ENCODE measurements at regions of chr4 and their contacts with region 1.

Region 1: GRCh38 chr4:73258686-73259570 is at the start of gene ANKRD17:
- DNase-seq: peak; percentile 74 to 97
- H3K4me3 ChIP-seq: peak within 1 kb of the TSS; percentile 86 to 97
- H3K27ac ChIP-seq: peak within 1 kb of the TSS; percentile 92 to 99
- H3K4me1 ChIP-seq: peaks cover 4 to 28% of the 10 kb centered on the region in 2 donors
- H3K27me3 ChIP-seq: no peaks in the 10 kb centered on the region
- CTCF ChIP-seq: peak in 2 of 3 experiments; percentile 24 to 39
- total RNA-seq, gene ANKRD17: 52.0 TPM

Region 2: DNA sequence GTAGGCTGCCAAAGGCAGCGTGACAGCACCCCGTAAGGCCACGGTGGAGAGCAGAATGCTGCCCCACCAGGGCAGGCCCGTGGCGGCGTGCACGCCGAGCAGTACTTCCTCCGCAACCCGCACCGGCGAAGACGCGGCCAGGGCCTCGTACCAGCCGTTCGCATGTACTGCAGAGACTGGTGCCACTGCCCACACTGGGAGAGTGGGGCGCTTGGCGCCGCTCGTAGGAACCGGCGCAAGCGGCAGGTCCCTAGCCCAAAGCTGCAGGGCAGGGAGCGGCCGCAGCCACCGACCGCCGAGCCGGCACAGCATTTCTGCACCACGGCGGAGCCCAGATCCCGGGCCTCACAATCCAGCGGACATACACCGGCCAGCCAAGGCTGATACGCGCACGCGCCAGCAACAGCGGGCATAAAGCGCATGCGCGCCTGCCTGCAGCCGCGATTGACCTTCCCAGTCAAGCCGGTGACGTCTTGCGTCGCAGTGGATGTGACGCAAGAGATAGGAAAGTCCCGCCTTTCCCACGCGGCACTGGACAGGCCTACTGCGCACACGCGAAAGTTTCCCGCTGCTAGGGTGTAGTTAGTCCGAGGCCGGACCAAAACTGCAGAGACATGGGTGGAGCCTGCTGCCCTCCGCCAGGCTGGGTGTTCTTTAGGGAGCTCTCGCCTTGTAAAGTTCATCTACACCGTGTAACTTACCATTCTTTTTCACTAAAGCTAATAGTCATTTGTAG is 189.4 kb before region 1 on chr4 and contains the start of gene COX18:
- intact Hi-C with region 1: loop called (anchors 1 kb)
- DNase-seq: peak; percentile 93 to 99
- H3K4me3 ChIP-seq: peak within 1 kb of the TSS; percentile 60 to 99
- H3K27ac ChIP-seq: peak within 1 kb of the TSS; percentile 88 to 96
- H3K4me1 ChIP-seq: peaks cover 3 to 7% of the 10 kb centered on the region in 2 donors
- H3K27me3 ChIP-seq: no peaks in the 10 kb centered on the region
- CTCF ChIP-seq: peak in 1 of 3 experiments; percentile 6
- total RNA-seq, gene COX18: 22.7 TPM

Region 3: DNA sequence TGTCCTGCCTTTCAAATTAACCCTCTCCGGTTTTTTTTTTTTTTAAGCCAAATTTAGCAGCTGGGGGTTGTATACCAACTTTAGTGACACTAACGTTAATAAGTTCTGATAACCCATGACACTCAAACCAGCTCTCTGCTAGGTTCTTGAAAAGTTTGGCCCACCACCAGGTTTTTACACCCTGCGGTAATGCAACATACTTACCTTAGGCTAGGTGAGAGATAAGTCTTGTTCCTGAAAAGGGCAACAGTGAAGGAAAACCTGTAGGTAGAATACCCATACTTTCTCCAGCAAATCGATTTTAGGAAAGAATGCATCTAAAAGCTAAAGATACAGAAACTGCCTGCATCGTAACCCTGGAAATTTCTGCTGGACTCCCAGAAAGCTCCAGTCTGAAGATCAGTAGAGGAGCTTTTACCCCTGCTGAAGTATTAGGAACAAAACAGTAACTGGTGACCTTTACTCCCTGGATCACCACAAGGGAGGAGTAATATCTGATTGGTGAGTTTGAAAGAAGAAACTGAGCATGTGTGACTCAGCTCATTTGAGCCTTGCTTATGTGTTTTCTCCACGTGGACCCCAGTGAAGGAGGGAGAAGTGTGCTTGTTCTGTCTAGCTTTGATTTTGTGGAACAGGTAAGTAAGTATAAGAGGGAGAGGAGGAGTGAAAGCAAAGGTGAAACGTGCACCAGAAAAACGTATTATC is 155.0 kb before region 1 on chr4:
- intact Hi-C with region 1: no loop called
- DNase-seq: no peak
- H3K4me3 ChIP-seq: no peak overlapping the region
- H3K27ac ChIP-seq: no peak overlapping the region
- H3K4me1 ChIP-seq: no peaks in the 10 kb centered on the region
- H3K27me3 ChIP-seq: no peaks in the 10 kb centered on the region
- CTCF ChIP-seq: no peak

Region 4: DNA sequence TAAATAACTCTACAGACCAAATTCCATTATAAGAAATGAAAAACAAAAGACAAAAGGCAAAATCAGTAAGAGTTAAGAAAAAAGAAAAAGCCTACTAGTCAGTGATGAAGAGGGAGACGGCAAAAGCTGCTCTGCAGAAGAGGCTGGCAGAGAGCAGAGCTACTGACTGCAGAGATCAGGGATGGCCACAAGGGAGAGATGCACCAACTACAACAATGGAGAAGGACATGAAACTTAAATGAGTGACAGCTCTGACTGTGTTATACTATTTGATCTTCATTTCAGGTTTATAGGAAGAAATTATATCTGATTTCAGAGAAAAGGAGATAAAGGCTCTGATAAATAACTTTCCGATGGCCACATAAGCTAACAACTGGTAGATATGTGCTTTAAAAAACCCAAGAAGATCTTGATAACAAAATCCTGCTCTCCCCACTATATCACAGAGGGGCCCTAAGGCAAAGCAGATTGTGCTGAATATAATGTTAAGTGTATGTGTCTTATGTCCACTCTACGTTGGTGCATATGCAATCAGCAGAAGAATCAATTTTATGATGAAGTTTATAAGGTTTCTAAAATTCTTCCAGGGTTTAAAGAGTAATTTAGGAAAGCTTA is 131.0 kb before region 1 on chr4:
- intact Hi-C with region 1: loop called (anchors 5 kb)
- DNase-seq: no peak
- H3K4me3 ChIP-seq: no peak overlapping the region
- H3K27ac ChIP-seq: no peak overlapping the region
- H3K4me1 ChIP-seq: no peaks in the 10 kb centered on the region
- H3K27me3 ChIP-seq: no peaks in the 10 kb centered on the region
- CTCF ChIP-seq: peak in 1 of 3 experiments; percentile 12

Region 5: DNA sequence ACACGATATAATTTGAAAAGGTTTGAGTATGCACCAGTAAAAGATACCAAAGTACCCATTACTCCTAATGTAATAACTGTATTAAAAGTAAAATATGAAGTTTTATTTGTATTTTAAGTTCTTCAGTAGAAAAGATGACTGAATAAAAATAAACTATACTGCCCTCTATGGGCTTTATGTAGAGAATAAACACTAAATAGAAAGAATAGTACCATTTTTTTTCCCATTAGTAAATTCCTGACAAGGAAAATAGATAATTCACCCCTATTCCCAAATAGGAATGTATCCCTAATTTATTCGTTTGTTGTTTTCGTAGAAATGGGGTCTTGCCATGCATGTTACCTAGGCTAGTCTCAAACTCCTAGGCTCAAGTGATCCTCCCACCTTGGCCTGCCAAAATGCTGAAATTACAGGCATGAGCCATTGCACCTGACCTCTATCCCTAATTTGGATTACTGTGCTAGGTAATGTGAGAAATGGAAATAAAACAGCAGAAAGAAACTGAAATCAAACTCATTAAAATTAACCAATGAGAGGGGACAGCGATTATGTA is 115.9 kb before region 1 on chr4:
- intact Hi-C with region 1: loop called (anchors 5 kb)
- DNase-seq: no peak
- H3K4me3 ChIP-seq: no peak overlapping the region
- H3K27ac ChIP-seq: no peak overlapping the region
- H3K4me1 ChIP-seq: no peaks in the 10 kb centered on the region
- H3K27me3 ChIP-seq: no peaks in the 10 kb centered on the region
- CTCF ChIP-seq: no peak

Region 6: DNA sequence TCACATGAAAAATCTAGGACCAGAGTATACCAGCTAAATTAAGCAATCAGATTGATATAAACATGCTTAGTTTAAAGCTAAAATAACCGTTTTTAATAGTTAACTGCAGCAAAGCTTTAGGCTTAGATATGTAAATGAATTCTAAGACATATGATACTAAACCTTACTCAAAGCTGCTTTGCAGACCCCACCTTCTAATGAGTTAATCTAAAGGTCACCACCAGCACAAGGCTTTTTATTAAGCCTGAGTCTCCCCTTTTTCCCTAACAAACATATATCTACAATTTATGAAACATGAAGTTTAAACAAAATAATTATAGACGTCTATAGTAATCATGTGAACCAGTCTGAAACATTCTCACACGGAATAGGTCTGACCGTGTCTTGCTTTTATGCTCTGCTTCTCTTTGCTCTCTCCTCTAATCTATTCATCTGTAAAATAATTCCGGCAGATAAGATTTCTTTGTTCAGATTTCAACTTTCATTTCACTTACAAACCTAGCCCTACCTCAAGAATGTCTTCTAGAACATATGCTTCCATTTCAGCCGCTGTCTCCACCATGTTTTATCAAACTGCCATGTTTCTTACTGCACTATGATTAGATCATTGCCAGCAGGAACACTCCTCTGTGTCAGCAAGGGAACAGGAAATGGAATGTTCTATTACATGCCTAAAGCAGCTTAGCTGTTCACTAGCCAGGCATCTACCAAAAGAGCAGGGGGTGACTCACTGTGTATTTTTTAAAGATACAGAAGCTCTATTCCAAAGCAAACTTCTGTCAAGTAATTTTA is 36.3 kb before region 1 on chr4:
- intact Hi-C with region 1: loop called (anchors 2 kb)
- DNase-seq: peak; percentile 33 to 83
- H3K4me3 ChIP-seq: peak overlapping the region; percentile 50 to 67
- H3K27ac ChIP-seq: peak overlapping the region; percentile 82 to 89
- H3K4me1 ChIP-seq: peaks cover 4 to 23% of the 10 kb centered on the region in 2 donors
- H3K27me3 ChIP-seq: no peaks in the 10 kb centered on the region
- CTCF ChIP-seq: no peak

Region 7: GRCh38 chr4:74038161-74039064 is 779.5 kb after region 1 on chr4 and contains the start of gene CXCL3:
- intact Hi-C with region 1: no loop called
- DNase-seq: peak in 1 of 2 donors; percentile 86
- H3K4me3 ChIP-seq: peak within 1 kb of the TSS; percentile 78 to 83
- H3K27ac ChIP-seq: peak within 1 kb of the TSS; percentile 22 to 46
- H3K4me1 ChIP-seq: peaks cover 0 to 3% of the 10 kb centered on the region in 2 donors
- H3K27me3 ChIP-seq: no peaks in the 10 kb centered on the region
- CTCF ChIP-seq: peak; percentile 18 to 41 (median 38)
- total RNA-seq, gene CXCL3: not detected

Measured in ascending aorta (tissue), 2 donors.